ENCODE measurements at regions of chr12 and their contacts with region 1.

Region 1: GRCh38 chr12:49945394-49946080 is 5.0 kb upstream of the AQP2 start:
- DNase-seq: peak; percentile 91
- H3K4me3 ChIP-seq: peak overlapping the region; percentile 33 to 36; a peak in 3 of 4 replicates
- H3K27ac ChIP-seq: peak overlapping the region in 1 of 2 experiments; percentile 29; a peak in 1 of 4 replicates
- H3K4me1 ChIP-seq: peaks cover 0 to 17% of the 10 kb centered on the region in 2 experiments; a peak in 1 of 4 replicates
- H3K27me3 ChIP-seq: no peaks in the 10 kb centered on the region
- CTCF ChIP-seq: peak; percentile 96
- EP300 ChIP-seq: no peak; a peak in 1 of 4 replicates
- RAD21 ChIP-seq: peak; percentile 63

Region 2: GRCh38 chr12:49872781-49873181 is 72.8 kb before region 1 on chr12:
- CTCF ChIA-PET with region 1: interaction called, 101 read pairs
- POLR2A ChIA-PET with region 1: interaction called, 5 read pairs
- DNase-seq: no peak
- H3K4me3 ChIP-seq: no peak overlapping the region
- H3K27ac ChIP-seq: peak overlapping the region in 1 of 2 experiments; percentile 12; a peak in 1 of 4 replicates
- H3K4me1 ChIP-seq: peaks cover 38 to 66% of the 10 kb centered on the region in 2 experiments
- H3K27me3 ChIP-seq: no peaks in the 10 kb centered on the region
- CTCF ChIP-seq: no peak
- EP300 ChIP-seq: no peak
- RAD21 ChIP-seq: no peak

Region 3: GRCh38 chr12:49903695-49904423 is 41.7 kb before region 1 on chr12 and contains the start of gene FAIM2:
- CTCF ChIA-PET with region 1: interaction called, 12 read pairs
- POLR2A ChIA-PET with region 1: no interaction called
- DNase-seq: peak; percentile 92
- H3K4me3 ChIP-seq: peak within 1 kb of the TSS; percentile 38 to 54
- H3K27ac ChIP-seq: peak within 1 kb of the TSS in 1 of 2 experiments; percentile 72; a peak in 2 of 4 replicates
- H3K4me1 ChIP-seq: peaks cover 0 to 22% of the 10 kb centered on the region in 2 experiments; a peak in 1 of 4 replicates
- H3K27me3 ChIP-seq: no peaks in the 10 kb centered on the region
- CTCF ChIP-seq: no peak
- EP300 ChIP-seq: no peak
- RAD21 ChIP-seq: no peak
- polyA plus RNA-seq, gene FAIM2: 6.3 and 11.3 TPM in 2 replicates

Region 4: GRCh38 chr12:49930515-49931288 is 14.8 kb before region 1 on chr12:
- CTCF ChIA-PET with region 1: interaction called, 90 read pairs
- POLR2A ChIA-PET with region 1: no interaction called
- DNase-seq: no peak
- H3K4me3 ChIP-seq: no peak overlapping the region
- H3K27ac ChIP-seq: 0 out of 4 replicates have a peak overlapping the region, but pooled peaks of 1 of the 2 experiments have one; percentile 6
- H3K4me1 ChIP-seq: peaks cover 0 to 5% of the 10 kb centered on the region in 2 experiments; a peak in 1 of 4 replicates
- H3K27me3 ChIP-seq: no peaks in the 10 kb centered on the region
- CTCF ChIP-seq: peak; percentile 34; the same call in 1 of the 2 replicates
- EP300 ChIP-seq: no peak
- RAD21 ChIP-seq: no peak

Region 5: GRCh38 chr12:50055831-50056638 is 110.5 kb after region 1 on chr12:
- CTCF ChIA-PET with region 1: interaction called, 19 read pairs
- POLR2A ChIA-PET with region 1: no interaction called
- DNase-seq: peak; percentile 86
- H3K4me3 ChIP-seq: no peak overlapping the region; a peak in 1 of 4 replicates
- H3K27ac ChIP-seq: no peak overlapping the region
- H3K4me1 ChIP-seq: peaks cover 7 to 29% of the 10 kb centered on the region in 2 experiments; a peak in 2 of 4 replicates
- H3K27me3 ChIP-seq: peaks cover 7% of the 10 kb centered on the region
- CTCF ChIP-seq: peak; percentile 97
- EP300 ChIP-seq: no peak
- RAD21 ChIP-seq: peak; percentile 88

Measured in SK-N-SH (cell line).